AG04450 (cell line): ENCODE measurements at regions of chr1 and their contacts with region 1.

Region 1: GRCh38 chr1:87953732-87954344 is 625.2 kb downstream of the LMO4 start:
- DNase-seq: peak; percentile 39
- H3K4me3 ChIP-seq: no peak overlapping the region
- H3K27ac ChIP-seq: no peak overlapping the region
- H3K27me3 ChIP-seq: no peaks in the 10 kb centered on the region
- CTCF ChIP-seq: peak; percentile 87

Region 2: GRCh38 chr1:87292684-87293493 is 660.9 kb before region 1 on chr1:
- CTCF ChIA-PET with region 1: interaction called, 18 read pairs
- POLR2A ChIA-PET with region 1: no interaction called
- DNase-seq: peak; percentile 27
- H3K4me3 ChIP-seq: no peak overlapping the region
- H3K27ac ChIP-seq: no peak overlapping the region
- H3K27me3 ChIP-seq: peaks cover 2% of the 10 kb centered on the region
- CTCF ChIP-seq: peak; percentile 76

Region 3: GRCh38 chr1:87335175-87335884 is 618.5 kb before region 1 on chr1:
- CTCF ChIA-PET with region 1: interaction called, 27 read pairs
- POLR2A ChIA-PET with region 1: no interaction called
- DNase-seq: no peak
- H3K4me3 ChIP-seq: peak overlapping the region; percentile 85
- H3K27ac ChIP-seq: peak overlapping the region; percentile 52
- H3K27me3 ChIP-seq: no peaks in the 10 kb centered on the region
- CTCF ChIP-seq: no peak

Region 4: DNA sequence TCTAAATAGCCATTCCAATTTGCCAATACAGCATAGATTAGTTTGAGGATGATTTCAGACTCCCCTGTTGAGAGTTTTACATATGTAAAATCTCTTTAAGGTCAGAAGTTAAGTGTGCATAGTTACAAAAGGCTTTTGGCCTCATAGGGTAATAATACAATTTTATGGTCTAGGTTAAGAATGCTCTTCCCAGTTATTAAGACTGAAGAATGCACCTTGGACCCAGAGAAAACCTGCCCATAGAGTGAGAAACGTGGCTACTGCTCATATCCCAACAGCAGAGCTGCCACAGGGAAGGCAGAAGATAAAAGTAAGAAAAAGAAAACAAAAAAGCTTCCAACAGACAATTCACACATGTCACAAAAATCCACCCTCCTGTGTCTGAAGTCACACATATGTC is 369.3 kb before region 1 on chr1:
- CTCF ChIA-PET with region 1: interaction called, 10 read pairs
- POLR2A ChIA-PET with region 1: interaction called, 4 read pairs
- DNase-seq: no peak
- H3K4me3 ChIP-seq: no peak overlapping the region
- H3K27ac ChIP-seq: no peak overlapping the region
- H3K27me3 ChIP-seq: no peaks in the 10 kb centered on the region
- CTCF ChIP-seq: no peak

Region 5: DNA sequence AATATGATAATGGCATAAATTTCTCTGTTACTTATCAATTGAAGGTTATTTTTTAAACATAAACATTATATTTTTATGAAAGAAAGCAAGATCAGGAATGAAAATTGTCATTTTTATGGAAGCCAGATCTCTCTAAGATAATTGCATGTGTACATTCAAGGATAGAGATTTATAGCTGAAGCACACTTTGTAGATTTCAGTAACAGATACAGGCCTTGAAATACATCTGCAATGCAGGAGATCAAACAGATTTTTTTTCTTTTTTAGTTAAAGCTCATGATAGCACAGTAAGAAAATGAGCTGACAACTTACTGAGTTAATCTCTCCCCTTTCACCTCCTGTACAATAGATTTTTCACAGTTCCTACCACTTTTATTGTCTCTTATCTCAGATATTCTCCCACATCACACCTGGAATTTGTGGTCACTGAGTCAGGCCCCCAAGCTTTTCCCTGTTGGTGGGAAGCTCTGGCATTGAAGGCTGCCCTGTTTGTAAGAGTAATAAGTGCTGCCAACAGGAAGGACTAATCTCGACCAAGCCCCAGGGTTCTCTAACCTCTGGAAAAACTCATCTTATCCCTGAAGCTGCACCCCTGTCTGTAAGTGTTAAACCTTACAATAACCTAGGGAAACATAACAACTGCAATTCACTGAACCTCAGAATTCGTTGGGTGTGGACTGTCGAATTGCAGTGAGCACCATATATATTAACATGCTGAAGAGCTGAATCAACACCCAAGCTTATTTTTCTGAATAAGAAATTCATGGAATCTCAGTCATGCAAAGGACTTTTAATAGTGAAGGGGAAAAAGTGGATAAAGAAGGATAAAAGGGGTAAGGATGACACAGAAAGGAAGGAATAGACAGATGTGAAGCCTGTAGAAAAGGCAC is 26.2 kb before region 1 on chr1:
- CTCF ChIA-PET with region 1: interaction called, 30 read pairs
- POLR2A ChIA-PET with region 1: no interaction called
- DNase-seq: no peak
- H3K4me3 ChIP-seq: no peak overlapping the region
- H3K27ac ChIP-seq: no peak overlapping the region
- H3K27me3 ChIP-seq: no peaks in the 10 kb centered on the region
- CTCF ChIP-seq: no peak

Region 6: GRCh38 chr1:87968197-87968955 is 14.5 kb after region 1 on chr1:
- CTCF ChIA-PET with region 1: interaction called, 41 read pairs
- POLR2A ChIA-PET with region 1: interaction called, 7 read pairs
- DNase-seq: no peak
- H3K4me3 ChIP-seq: no peak overlapping the region
- H3K27ac ChIP-seq: peak overlapping the region; percentile 65
- H3K27me3 ChIP-seq: no peaks in the 10 kb centered on the region
- CTCF ChIP-seq: no peak

Region 7: DNA sequence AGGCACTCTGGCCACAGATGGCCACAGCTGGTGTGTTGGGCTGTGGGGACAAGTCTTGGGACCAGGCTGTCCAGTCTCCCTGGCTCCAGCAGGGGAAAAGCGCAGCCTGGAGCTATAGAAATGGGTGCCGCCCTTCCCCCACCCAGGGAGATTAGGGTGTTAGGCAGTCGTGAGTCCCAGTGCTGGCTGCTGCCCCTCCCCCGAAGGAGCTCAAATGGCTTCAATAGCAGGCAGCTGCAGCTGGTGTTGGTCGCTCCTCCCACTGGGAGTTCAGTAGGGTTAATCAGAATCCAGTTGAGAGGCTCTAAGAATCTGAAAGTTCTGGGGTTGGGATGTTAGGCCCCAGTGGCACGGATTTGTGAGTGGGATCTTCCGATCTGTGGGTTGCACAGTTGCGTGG is 134.6 kb after region 1 on chr1:
- CTCF ChIA-PET with region 1: no interaction called
- POLR2A ChIA-PET with region 1: no interaction called
- DNase-seq: no peak
- H3K4me3 ChIP-seq: no peak overlapping the region
- H3K27ac ChIP-seq: no peak overlapping the region
- H3K27me3 ChIP-seq: no peaks in the 10 kb centered on the region
- CTCF ChIP-seq: no peak

Region 8: GRCh38 chr1:88499671-88500070 is 545.8 kb after region 1 on chr1:
- CTCF ChIA-PET with region 1: no interaction called
- POLR2A ChIA-PET with region 1: no interaction called
- DNase-seq: no peak
- H3K4me3 ChIP-seq: no peak overlapping the region
- H3K27ac ChIP-seq: no peak overlapping the region
- H3K27me3 ChIP-seq: no peaks in the 10 kb centered on the region
- CTCF ChIP-seq: no peak